A549 (cell line): ENCODE measurements at regions of chr3 and their contacts with region 1.

Region 1: DNA sequence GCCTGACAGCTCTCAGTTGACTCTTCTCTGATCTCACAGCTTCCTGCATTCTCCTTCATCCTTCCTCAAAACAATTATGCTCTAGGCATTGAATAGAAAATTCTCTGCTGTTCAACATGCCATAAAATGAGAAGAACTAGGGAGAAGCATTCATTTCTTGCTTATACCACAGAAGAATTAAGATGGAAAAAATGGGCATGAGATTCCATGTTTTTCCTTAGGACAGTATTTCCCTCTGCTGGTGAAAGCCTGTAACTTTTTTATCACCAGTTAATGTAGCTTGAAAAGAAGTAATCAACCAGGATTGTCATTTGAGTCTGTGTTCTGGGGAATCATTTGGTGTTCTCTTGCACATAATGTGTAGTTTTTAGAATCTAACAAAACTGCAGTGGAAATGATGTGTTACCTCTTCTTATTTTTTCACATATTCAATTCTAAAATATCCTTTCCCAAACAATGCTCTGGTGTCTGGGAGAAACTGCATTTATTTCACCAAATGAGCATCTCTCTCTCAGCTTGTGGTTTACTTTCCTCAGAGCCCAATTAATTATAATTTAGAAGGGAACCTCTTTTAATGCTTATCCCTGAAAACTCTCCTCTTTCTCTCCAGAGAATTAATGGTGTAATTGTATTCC is 92.8 kb upstream of the DCBLD2 start:
- DNase-seq: peak in 1 of 2 experiments; percentile 69
- ATAC-seq: peak; percentile 65 to 88; a peak in 5 of 6 replicates
- H3K4me3 ChIP-seq: no peak overlapping the region
- H3K27ac ChIP-seq: peak overlapping the region; percentile 44 to 64; a peak in 4 of 6 replicates
- H3K4me1 ChIP-seq: peaks cover 6% of the 10 kb centered on the region; the same call in 2 of the 3 replicates
- CTCF ChIP-seq: peak; percentile 90
- EP300 ChIP-seq: no peak
- POLR2A ChIP-seq: no peak
- RAD21 ChIP-seq: peak; percentile 94 to 97

Region 2: GRCh38 chr3:98817547-98818041 is 176.7 kb before region 1 on chr3:
- CTCF ChIA-PET with region 1: interaction called, 111 read pairs
- POLR2A ChIA-PET with region 1: interaction called, 3 read pairs
- DNase-seq: peak; percentile 47 to 59
- ATAC-seq: peak; percentile 55 to 67; a peak in 5 of 6 replicates
- H3K4me3 ChIP-seq: no peak overlapping the region
- H3K27ac ChIP-seq: peak overlapping the region; percentile 51 to 76; a peak in 5 of 6 replicates
- H3K4me1 ChIP-seq: peaks cover 63% of the 10 kb centered on the region
- CTCF ChIP-seq: peak; percentile 71
- EP300 ChIP-seq: no peak
- POLR2A ChIP-seq: no peak
- RAD21 ChIP-seq: peak; percentile 70 to 79

Region 3: GRCh38 chr3:98846101-98846500 is 148.1 kb before region 1 on chr3:
- CTCF ChIA-PET with region 1: interaction called, 15 read pairs
- POLR2A ChIA-PET with region 1: no interaction called
- DNase-seq: no peak
- ATAC-seq: no peak
- H3K4me3 ChIP-seq: no peak overlapping the region
- H3K27ac ChIP-seq: no peak overlapping the region; a peak in 1 of 6 replicates
- H3K4me1 ChIP-seq: peaks cover 76% of the 10 kb centered on the region
- CTCF ChIP-seq: no peak
- EP300 ChIP-seq: no peak
- POLR2A ChIP-seq: no peak
- RAD21 ChIP-seq: no peak

Region 4: DNA sequence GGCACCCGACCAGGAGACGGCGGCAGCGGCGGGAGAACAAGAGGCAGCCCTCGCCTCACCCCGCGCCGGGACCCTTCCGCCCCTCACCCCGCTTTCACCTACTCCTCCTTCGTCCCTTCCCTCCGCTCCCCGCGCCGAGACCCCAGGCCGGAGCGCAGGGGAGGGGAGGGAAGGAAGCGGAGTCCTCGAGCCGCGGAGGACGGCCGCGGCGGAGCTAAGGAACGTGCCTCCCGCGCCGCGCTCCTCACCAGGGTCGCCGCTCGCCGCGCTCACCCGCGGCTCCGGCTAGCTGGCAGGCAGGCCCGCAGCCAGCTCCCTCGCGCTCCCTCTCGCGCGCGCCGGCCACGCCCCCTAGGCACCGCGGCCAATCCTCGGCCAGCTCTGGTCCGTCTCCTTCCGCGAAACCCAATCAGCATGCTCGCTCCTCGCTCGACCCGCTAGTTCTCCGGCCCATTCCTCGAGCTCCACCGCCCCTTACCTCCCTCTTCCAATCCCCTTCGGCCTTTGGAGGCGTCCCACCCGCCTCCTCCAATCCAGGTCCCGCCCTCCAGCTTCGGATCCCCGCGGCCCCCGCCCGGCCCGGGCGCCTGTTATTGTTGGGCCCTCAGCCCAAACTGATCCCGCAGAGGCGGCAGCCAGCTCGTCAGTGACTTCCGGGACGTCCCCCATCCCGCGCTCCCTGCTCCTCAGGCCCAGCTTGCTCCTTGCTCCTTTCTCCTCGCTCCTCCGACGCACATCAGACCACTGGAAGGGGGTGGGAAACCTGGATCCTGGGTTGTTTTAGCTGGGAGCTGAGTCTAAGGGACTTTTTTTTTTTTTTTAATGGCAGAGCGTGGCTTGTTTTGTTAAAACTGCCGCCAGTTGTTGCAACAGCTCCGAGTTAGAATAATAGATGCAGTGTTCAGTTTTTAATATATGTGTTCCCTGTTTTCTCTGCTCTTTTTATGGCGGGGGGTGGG is 92.6 kb before region 1 on chr3 and contains the start of gene DCBLD2:
- CTCF ChIA-PET with region 1: interaction called, 17 read pairs
- POLR2A ChIA-PET with region 1: interaction called, 4 read pairs
- DNase-seq: peak; percentile 94 to 99
- ATAC-seq: peak; percentile 93 to 97
- H3K4me3 ChIP-seq: peak within 1 kb of the TSS; percentile 93
- H3K27ac ChIP-seq: peak within 1 kb of the TSS; percentile 93 to 95
- H3K4me1 ChIP-seq: peaks cover 35% of the 10 kb centered on the region
- CTCF ChIP-seq: no peak
- EP300 ChIP-seq: no peak; a peak in 1 of 5 replicates
- POLR2A ChIP-seq: peak; percentile 96
- RAD21 ChIP-seq: no peak; a peak in 1 of 5 replicates
- polyA plus RNA-seq, gene DCBLD2: 582 and 623 TPM in 2 replicates

Region 5: DNA sequence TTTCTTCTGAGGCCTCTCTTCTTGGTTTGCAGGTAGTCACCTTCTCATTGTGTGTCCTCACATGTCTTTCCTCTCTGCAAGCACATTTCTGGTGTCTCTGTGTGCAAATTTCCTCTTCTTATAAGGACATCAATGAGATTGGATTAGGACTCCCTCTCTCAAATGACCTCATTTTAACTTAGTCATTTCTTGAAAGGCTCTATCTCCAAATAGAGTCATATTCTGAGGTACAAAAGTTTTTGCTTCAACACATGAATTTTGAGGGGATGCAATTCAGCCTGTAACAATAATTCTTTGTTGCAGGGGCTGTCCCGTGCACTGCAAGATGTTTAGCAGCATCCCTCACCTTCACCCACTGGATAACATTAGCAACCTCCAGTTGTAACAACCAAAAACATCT is 22.2 kb after region 1 on chr3:
- CTCF ChIA-PET with region 1: no interaction called
- POLR2A ChIA-PET with region 1: no interaction called
- DNase-seq: no peak
- ATAC-seq: no peak
- H3K4me3 ChIP-seq: no peak overlapping the region
- H3K27ac ChIP-seq: no peak overlapping the region
- H3K4me1 ChIP-seq: no peaks in the 10 kb centered on the region
- CTCF ChIP-seq: no peak
- EP300 ChIP-seq: no peak
- POLR2A ChIP-seq: no peak
- RAD21 ChIP-seq: no peak